CD8-positive, alpha-beta T cell (primary cell): ENCODE measurements at regions of chr7 and their contacts with region 1.

Region 1: GRCh38 chr7:83908526-83908925 is 259.6 kb upstream of the SEMA3E start:
- DNase-seq: no peak
- ATAC-seq: no peak
- H3K4me3 ChIP-seq: no peak overlapping the region
- H3K4me3 Mint-ChIP-seq: no peak overlapping the region
- H3K27ac ChIP-seq: no peak overlapping the region
- H3K27ac Mint-ChIP-seq: no peak overlapping the region
- H3K4me1 ChIP-seq: no peaks in the 10 kb centered on the region
- H3K4me1 Mint-ChIP-seq: no peaks in the 10 kb centered on the region
- H3K27me3 ChIP-seq: no peaks in the 10 kb centered on the region
- H3K27me3 Mint-ChIP-seq: no peaks in the 10 kb centered on the region
- CTCF ChIP-seq: no peak

Region 2: GRCh38 chr7:83362871-83363550 is 545.5 kb before region 1 on chr7:
- CTCF ChIA-PET with region 1: no interaction called
- POLR2A ChIA-PET with region 1: no interaction called
- intact Hi-C with region 1: no loop called
- DNase-seq: no peak
- ATAC-seq: no peak
- H3K4me3 ChIP-seq: no peak overlapping the region
- H3K4me3 Mint-ChIP-seq: no peak overlapping the region
- H3K27ac ChIP-seq: no peak overlapping the region
- H3K27ac Mint-ChIP-seq: no peak overlapping the region
- H3K4me1 ChIP-seq: no peaks in the 10 kb centered on the region
- H3K4me1 Mint-ChIP-seq: no peaks in the 10 kb centered on the region
- H3K27me3 ChIP-seq: no peaks in the 10 kb centered on the region
- H3K27me3 Mint-ChIP-seq: no peaks in the 10 kb centered on the region
- CTCF ChIP-seq: no peak

Region 3: GRCh38 chr7:83964318-83964717 is 55.8 kb after region 1 on chr7:
- CTCF ChIA-PET with region 1: no interaction called
- POLR2A ChIA-PET with region 1: no interaction called
- intact Hi-C with region 1: loop called in 1 of 2 experiments (anchors 10 kb)
- DNase-seq: no peak
- ATAC-seq: no peak
- H3K4me3 ChIP-seq: no peak overlapping the region
- H3K4me3 Mint-ChIP-seq: no peak overlapping the region
- H3K27ac ChIP-seq: no peak overlapping the region
- H3K27ac Mint-ChIP-seq: no peak overlapping the region
- H3K4me1 ChIP-seq: no peaks in the 10 kb centered on the region
- H3K4me1 Mint-ChIP-seq: no peaks in the 10 kb centered on the region
- H3K27me3 ChIP-seq: no peaks in the 10 kb centered on the region
- H3K27me3 Mint-ChIP-seq: no peaks in the 10 kb centered on the region
- CTCF ChIP-seq: no peak

Region 4: DNA sequence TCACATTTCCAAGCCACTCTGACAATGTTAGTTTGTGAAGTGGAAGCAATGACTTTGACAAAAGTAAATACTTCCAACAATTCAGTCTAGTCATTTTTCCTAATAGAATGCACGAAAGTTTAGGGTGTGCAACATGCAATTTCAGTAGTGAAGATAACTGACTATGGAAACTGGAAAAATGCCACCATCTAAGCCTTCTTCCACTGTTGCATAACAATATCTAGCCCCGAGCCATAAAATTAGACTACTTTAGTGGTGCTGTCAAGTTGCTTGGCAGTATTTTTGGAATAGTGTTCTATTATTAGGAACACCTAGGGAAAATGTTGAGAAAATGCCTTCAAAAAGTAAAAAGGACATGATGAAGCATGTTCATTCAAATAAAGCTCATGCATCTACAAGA is 268.2 kb after region 1 on chr7:
- CTCF ChIA-PET with region 1: no interaction called
- POLR2A ChIA-PET with region 1: no interaction called
- intact Hi-C with region 1: no loop called
- DNase-seq: no peak
- ATAC-seq: no peak
- H3K4me3 ChIP-seq: no peak overlapping the region
- H3K4me3 Mint-ChIP-seq: no peak overlapping the region
- H3K27ac ChIP-seq: no peak overlapping the region
- H3K27ac Mint-ChIP-seq: no peak overlapping the region
- H3K4me1 ChIP-seq: no peaks in the 10 kb centered on the region
- H3K4me1 Mint-ChIP-seq: no peaks in the 10 kb centered on the region
- H3K27me3 ChIP-seq: no peaks in the 10 kb centered on the region
- H3K27me3 Mint-ChIP-seq: no peaks in the 10 kb centered on the region
- CTCF ChIP-seq: no peak